Heart left ventricle (tissue), 16 donors: ENCODE measurements at regions of chr3 and their contacts with region 1.

Region 1: DNA sequence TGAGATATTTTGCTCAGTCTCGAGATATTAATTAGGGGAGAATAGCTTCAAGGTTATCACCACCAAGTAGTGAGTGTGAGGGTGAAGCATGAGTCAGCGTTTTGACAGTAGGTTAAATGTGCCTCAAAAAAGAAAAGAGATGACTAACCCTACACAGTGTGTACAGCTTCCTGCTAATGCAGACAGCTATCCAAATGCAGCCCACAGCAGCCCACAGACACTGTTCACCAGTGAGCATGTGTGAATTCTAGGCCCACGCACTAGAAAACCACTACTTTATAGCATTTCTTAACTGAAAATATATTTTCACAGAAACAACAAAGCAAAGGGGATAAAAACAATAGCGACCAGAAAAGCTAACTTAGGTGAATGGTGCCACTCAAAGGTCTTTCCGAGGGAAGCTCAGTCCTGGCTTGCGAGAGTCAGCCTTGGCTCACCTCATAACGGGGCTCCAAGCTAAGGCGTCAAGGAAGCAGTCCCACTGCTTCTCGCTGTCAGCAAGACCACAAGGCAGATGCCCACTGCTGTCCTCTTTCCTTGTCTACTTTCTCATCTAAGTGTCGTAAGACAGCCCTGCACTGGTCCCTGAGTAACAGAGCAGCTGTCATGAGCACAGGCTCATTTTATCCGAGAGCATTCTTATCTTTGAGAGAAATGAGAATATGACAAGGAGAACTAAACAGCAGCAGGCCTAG is 47.6 kb downstream of the TXNRD3 start:
- DNase-seq: no peak
- ATAC-seq: peak in 3 of 4 donors; percentile 56 to 81 (median 71)
- H3K4me3 ChIP-seq: no peak overlapping the region
- H3K27ac ChIP-seq: no peak overlapping the region
- H3K4me1 ChIP-seq: peaks cover 0 to 6% (median 0%) of the 10 kb centered on the region in 12 donors
- H3K27me3 ChIP-seq: no peaks in the 10 kb centered on the region
- CTCF ChIP-seq: no peak
- POLR2A ChIP-seq: no peak

Region 2: DNA sequence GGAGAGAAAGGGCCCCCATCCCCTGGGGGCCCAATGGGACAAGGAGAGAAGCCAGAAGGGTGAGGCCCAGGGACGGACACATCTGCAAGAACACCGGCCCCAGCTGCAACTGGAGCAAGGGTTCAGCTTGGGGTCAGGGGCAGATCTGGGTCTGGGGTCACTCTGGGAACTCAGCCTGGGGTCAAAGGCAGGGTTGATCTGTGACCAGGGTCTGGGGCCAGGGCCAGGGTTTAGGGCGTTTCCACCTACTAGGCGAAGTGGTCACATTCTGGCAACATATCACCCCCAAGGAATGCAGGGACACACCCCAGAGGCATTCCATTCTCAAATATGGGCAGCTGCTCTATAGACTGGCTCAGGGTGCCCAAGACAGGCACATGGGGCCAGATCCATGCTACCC is 98.8 kb before region 1 on chr3:
- intact Hi-C with region 1: no loop called
- DNase-seq: peak in 2 of 5 donors; percentile 11 to 19
- ATAC-seq: no peak
- H3K4me3 ChIP-seq: no peak overlapping the region
- H3K27ac ChIP-seq: no peak overlapping the region
- H3K4me1 ChIP-seq: peaks cover 0 to 4% (median 0%) of the 10 kb centered on the region in 12 donors
- H3K27me3 ChIP-seq: peaks cover 0 to 9% (median 0%) of the 10 kb centered on the region in 9 donors
- CTCF ChIP-seq: no peak
- POLR2A ChIP-seq: no peak

Region 3: GRCh38 chr3:126621171-126621570 is 13.8 kb after region 1 on chr3:
- intact Hi-C with region 1: loop called in 1 of 10 experiments (anchors 1 kb)
- DNase-seq: peak; percentile 58 to 81 (median 68)
- ATAC-seq: peak; percentile 98 to 100 (median 99)
- H3K4me3 ChIP-seq: no peak overlapping the region
- H3K27ac ChIP-seq: peak overlapping the region in 4 of 12 donors; percentile 2 to 35 (median 12)
- H3K4me1 ChIP-seq: peaks cover 0 to 16% (median 2%) of the 10 kb centered on the region in 12 donors
- H3K27me3 ChIP-seq: no peaks in the 10 kb centered on the region
- CTCF ChIP-seq: no peak
- POLR2A ChIP-seq: no peak